K562 (cell line): ENCODE measurements at regions of chr1 and their contacts with region 1.

Region 1: GRCh38 chr1:198681831-198682759 is 43.3 kb downstream of the PTPRC start:
- DNase-seq: peak in 3 of 4 experiments; percentile 24 to 89 (median 62)
- ATAC-seq: peak; percentile 93
- H3K4me3 ChIP-seq: peak overlapping the region; percentile 3; the same call in 1 of the 2 replicates
- H3K27ac ChIP-seq: peak overlapping the region; percentile 91
- H3K4me1 ChIP-seq: peaks cover 4 to 5% of the 10 kb centered on the region in 2 experiments; a peak in 4 of 5 replicates
- H3K27me3 ChIP-seq: no peaks in the 10 kb centered on the region
- CTCF ChIP-seq: no peak
- EP300 ChIP-seq: peak; percentile 58
- POLR2A ChIP-seq: peak; percentile 58
- RAD21 ChIP-seq: peak; percentile 25 to 31; a peak in 3 of 4 replicates

Region 2: GRCh38 chr1:198072177-198072576 is 609.9 kb before region 1 on chr1:
- CTCF ChIA-PET with region 1: interaction called, 3 read pairs
- POLR2A ChIA-PET with region 1: no interaction called
- in situ Hi-C with region 1: no loop called
- intact Hi-C with region 1: loop called (anchors 5 kb)
- DNase-seq: no peak
- ATAC-seq: peak; percentile 57; the same call in 2 of the 3 replicates
- H3K4me3 ChIP-seq: no peak overlapping the region
- H3K27ac ChIP-seq: no peak overlapping the region
- H3K4me1 ChIP-seq: no peaks in the 10 kb centered on the region
- H3K27me3 ChIP-seq: no peaks in the 10 kb centered on the region
- CTCF ChIP-seq: peak in 2 of 3 experiments; percentile 20 to 50; a peak in 3 of 6 replicates
- EP300 ChIP-seq: no peak
- POLR2A ChIP-seq: no peak
- RAD21 ChIP-seq: peak in 1 of 2 experiments; percentile 67; a peak in 2 of 4 replicates

Region 3: GRCh38 chr1:198520524-198521254 is 161.4 kb before region 1 on chr1:
- CTCF ChIA-PET with region 1: no interaction called
- POLR2A ChIA-PET with region 1: interaction called, 4 read pairs
- in situ Hi-C with region 1: no loop called
- intact Hi-C with region 1: loop called (anchors 1 kb)
- DNase-seq: no peak
- ATAC-seq: no peak
- H3K4me3 ChIP-seq: no peak overlapping the region
- H3K27ac ChIP-seq: no peak overlapping the region
- H3K4me1 ChIP-seq: peaks cover 0 to 8% of the 10 kb centered on the region in 2 experiments; a peak in 2 of 5 replicates
- H3K27me3 ChIP-seq: no peaks in the 10 kb centered on the region
- CTCF ChIP-seq: no peak
- EP300 ChIP-seq: no peak
- POLR2A ChIP-seq: no peak
- RAD21 ChIP-seq: no peak

Region 4: DNA sequence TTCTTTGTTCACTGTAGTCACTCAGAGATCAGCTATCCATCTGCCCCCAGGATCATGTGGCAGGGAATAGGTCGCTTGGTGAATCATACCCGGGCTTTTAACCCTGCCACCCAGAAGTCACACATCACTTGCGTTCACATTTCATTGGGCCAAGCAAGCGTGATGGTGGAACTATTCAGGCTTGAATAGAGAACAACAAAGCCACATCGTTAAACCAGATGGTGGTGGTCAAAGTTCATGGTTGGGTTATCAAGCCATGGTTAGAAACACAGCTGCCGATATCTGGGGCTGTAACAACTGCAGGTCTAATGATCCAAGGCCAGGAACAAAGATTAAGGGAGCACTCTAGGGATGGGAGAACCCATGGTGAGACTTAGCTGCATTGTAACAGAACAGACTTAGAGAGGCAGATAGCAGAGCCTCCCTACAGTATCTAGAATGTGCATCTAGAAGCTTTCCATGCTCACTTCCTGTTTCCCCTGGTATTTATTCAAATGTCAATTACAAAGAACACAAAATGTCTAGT is 83.2 kb before region 1 on chr1:
- CTCF ChIA-PET with region 1: no interaction called
- POLR2A ChIA-PET with region 1: no interaction called
- in situ Hi-C with region 1: no loop called
- intact Hi-C with region 1: loop called (anchors 2 kb)
- DNase-seq: peak in 3 of 4 experiments; percentile 19 to 81 (median 63)
- ATAC-seq: peak; percentile 78
- H3K4me3 ChIP-seq: no peak overlapping the region
- H3K27ac ChIP-seq: peak overlapping the region; percentile 72
- H3K4me1 ChIP-seq: peaks cover 6 to 44% of the 10 kb centered on the region in 2 experiments; a peak in 3 of 5 replicates
- H3K27me3 ChIP-seq: no peaks in the 10 kb centered on the region
- CTCF ChIP-seq: no peak
- EP300 ChIP-seq: peak; percentile 80; the same call in 1 of the 2 replicates
- POLR2A ChIP-seq: 0 out of 2 replicates have a peak, but pooled peaks have one; percentile 31
- RAD21 ChIP-seq: peak in 1 of 2 experiments; percentile 38; a peak in 1 of 4 replicates

Region 5: GRCh38 chr1:198633675-198634121 is 48.4 kb before region 1 on chr1:
- CTCF ChIA-PET with region 1: no interaction called
- POLR2A ChIA-PET with region 1: interaction called, 5 read pairs
- in situ Hi-C with region 1: no loop called
- intact Hi-C with region 1: loop called (anchors 1 kb)
- DNase-seq: peak in 2 of 4 experiments; percentile 64 to 86
- ATAC-seq: peak; percentile 80
- H3K4me3 ChIP-seq: no peak overlapping the region
- H3K27ac ChIP-seq: peak overlapping the region; percentile 61
- H3K4me1 ChIP-seq: peaks cover 7 to 22% of the 10 kb centered on the region in 2 experiments; a peak in 2 of 5 replicates
- H3K27me3 ChIP-seq: no peaks in the 10 kb centered on the region
- CTCF ChIP-seq: no peak; a peak in 1 of 6 replicates
- EP300 ChIP-seq: peak; percentile 90
- POLR2A ChIP-seq: no peak
- RAD21 ChIP-seq: peak; percentile 44 to 54

Region 6: GRCh38 chr1:198641501-198641900 is 40.6 kb before region 1 on chr1:
- CTCF ChIA-PET with region 1: no interaction called
- POLR2A ChIA-PET with region 1: no interaction called
- in situ Hi-C with region 1: no loop called
- intact Hi-C with region 1: loop called (anchors 1 kb)
- DNase-seq: peak in 1 of 4 experiments; percentile 52
- ATAC-seq: peak; percentile 55
- H3K4me3 ChIP-seq: peak overlapping the region; percentile 37
- H3K27ac ChIP-seq: peak overlapping the region; percentile 79
- H3K4me1 ChIP-seq: peaks cover 0 to 2% of the 10 kb centered on the region in 2 experiments; a peak in 1 of 5 replicates
- H3K27me3 ChIP-seq: no peaks in the 10 kb centered on the region
- CTCF ChIP-seq: no peak
- EP300 ChIP-seq: no peak
- POLR2A ChIP-seq: no peak
- RAD21 ChIP-seq: no peak

Region 7: DNA sequence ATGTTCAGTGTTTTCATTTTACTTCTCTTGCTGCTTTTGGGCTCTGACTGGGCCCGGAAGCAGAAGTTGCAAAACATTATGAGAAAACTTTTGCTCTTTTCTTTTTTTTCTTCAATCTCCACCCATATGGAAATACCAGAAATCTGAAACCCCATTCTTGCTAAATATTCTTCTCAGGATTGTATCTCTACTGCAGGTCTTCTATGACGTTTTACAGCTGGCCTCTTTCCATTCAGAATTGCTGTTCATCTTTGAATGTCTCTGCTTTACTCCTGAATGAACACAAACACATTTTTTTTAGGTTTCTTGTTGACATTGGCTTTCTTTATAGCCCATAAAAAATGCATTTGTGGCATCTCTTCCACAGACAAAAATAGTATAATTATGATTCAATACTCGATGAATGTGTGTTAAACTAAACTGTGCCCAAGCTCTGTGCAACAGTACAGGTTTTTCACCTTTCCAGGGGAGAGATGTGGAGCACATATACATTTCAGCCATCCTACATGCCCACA is 24.5 kb before region 1 on chr1:
- CTCF ChIA-PET with region 1: no interaction called
- POLR2A ChIA-PET with region 1: no interaction called
- in situ Hi-C with region 1: no loop called
- intact Hi-C with region 1: loop called (anchors 2 kb)
- DNase-seq: peak in 1 of 4 experiments; percentile 21
- ATAC-seq: peak; percentile 26
- H3K4me3 ChIP-seq: no peak overlapping the region
- H3K27ac ChIP-seq: peak overlapping the region; percentile 59; the same call in 2 of the 3 replicates
- H3K4me1 ChIP-seq: peaks cover 0 to 23% of the 10 kb centered on the region in 2 experiments; a peak in 3 of 5 replicates
- H3K27me3 ChIP-seq: no peaks in the 10 kb centered on the region
- CTCF ChIP-seq: no peak
- EP300 ChIP-seq: no peak
- POLR2A ChIP-seq: no peak
- RAD21 ChIP-seq: no peak